MCF 10A (cell line): ENCODE measurements at regions of chr1 and their contacts with region 1.

Region 1: DNA sequence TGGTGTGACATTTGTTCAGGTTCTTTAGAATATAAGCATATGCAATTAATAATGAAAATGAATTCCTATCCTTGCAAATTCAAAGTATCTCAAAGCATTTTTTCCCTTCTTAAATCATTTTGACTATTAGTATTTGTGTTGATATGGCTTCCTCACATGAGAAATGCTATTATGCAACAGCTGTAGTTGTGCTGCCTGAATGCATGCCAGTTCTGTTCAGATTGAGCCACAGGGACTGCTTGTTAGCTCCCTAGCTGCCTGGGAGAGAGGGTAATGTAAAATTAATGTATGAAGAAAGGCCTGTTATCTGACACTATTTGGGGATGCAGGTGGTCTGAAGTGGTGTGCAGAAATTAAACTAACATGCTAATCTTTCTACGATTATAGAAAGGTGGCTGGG is 45.5 kb downstream of the CACHD1 start:
- DNase-seq: peak; percentile 74
- H3K4me3 Mint-ChIP-seq: no peak overlapping the region
- H3K27ac Mint-ChIP-seq: no peak overlapping the region
- H3K4me1 Mint-ChIP-seq: peaks cover 22% of the 10 kb centered on the region
- H3K27me3 Mint-ChIP-seq: no peaks in the 10 kb centered on the region
- CTCF ChIP-seq: no peak

Region 2: GRCh38 chr1:64396817-64397216 is 118.6 kb before region 1 on chr1:
- CTCF ChIA-PET with region 1: no interaction called
- POLR2A ChIA-PET with region 1: no interaction called
- intact Hi-C with region 1: no loop called
- DNase-seq: peak; percentile 20
- H3K4me3 Mint-ChIP-seq: no peak overlapping the region
- H3K27ac Mint-ChIP-seq: no peak overlapping the region
- H3K4me1 Mint-ChIP-seq: no peaks in the 10 kb centered on the region
- H3K27me3 Mint-ChIP-seq: no peaks in the 10 kb centered on the region
- CTCF ChIP-seq: no peak

Region 3: GRCh38 chr1:64476251-64476952 is 39.0 kb before region 1 on chr1:
- CTCF ChIA-PET with region 1: no interaction called
- POLR2A ChIA-PET with region 1: interaction called, 10 read pairs
- intact Hi-C with region 1: no loop called
- DNase-seq: peak; percentile 43
- H3K4me3 Mint-ChIP-seq: no peak overlapping the region
- H3K27ac Mint-ChIP-seq: peak overlapping the region; percentile 72
- H3K4me1 Mint-ChIP-seq: peaks cover 39% of the 10 kb centered on the region
- H3K27me3 Mint-ChIP-seq: no peaks in the 10 kb centered on the region
- CTCF ChIP-seq: no peak

Region 4: DNA sequence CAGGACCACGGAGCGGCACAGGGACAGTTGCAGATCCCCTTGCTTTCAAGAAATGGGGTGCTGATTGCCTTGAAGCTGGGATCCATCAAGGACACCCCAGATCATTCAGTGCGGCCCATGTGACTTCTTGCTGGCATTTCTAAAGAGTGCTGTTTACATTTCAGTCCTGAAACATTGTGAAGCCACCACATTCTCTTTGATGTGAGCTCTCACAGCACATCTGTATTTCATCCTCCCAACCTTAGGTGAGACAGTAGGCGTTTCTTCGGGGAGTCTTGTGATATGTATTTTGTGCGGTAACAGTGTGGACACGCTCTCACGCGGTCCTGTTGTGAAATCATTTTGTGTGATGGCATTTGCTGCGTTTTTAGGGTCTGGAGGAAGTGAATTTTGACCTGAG is 11.7 kb after region 1 on chr1:
- CTCF ChIA-PET with region 1: interaction called, 3 read pairs
- POLR2A ChIA-PET with region 1: interaction called, 15 read pairs
- intact Hi-C with region 1: no loop called
- DNase-seq: no peak
- H3K4me3 Mint-ChIP-seq: no peak overlapping the region
- H3K27ac Mint-ChIP-seq: peak overlapping the region; percentile 80
- H3K4me1 Mint-ChIP-seq: peaks cover 38% of the 10 kb centered on the region
- H3K27me3 Mint-ChIP-seq: no peaks in the 10 kb centered on the region
- CTCF ChIP-seq: no peak

Region 5: DNA sequence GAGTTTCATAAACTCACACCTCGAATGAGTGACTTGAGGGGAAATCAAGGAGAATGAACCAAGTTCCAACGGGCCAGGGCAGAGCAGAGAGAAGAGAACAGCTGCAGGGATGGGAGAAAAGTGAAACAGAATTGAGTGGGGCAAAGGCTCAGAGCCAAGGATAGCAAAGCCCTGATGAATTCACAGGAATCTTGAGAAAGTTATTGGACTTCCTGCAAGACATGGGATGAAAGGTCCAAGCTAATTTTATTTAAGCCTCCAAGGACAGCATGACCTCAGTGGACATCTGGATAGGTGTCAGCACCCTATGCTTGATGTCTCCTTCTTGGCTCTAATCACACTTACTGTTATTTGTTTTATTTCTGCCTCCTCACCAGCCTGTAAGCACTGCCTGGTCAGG is 186.5 kb after region 1 on chr1:
- CTCF ChIA-PET with region 1: no interaction called
- POLR2A ChIA-PET with region 1: no interaction called
- intact Hi-C with region 1: no loop called
- DNase-seq: no peak
- H3K4me3 Mint-ChIP-seq: no peak overlapping the region
- H3K27ac Mint-ChIP-seq: no peak overlapping the region
- H3K4me1 Mint-ChIP-seq: no peaks in the 10 kb centered on the region
- H3K27me3 Mint-ChIP-seq: no peaks in the 10 kb centered on the region
- CTCF ChIP-seq: no peak